Transverse colon (tissue), 4 donors: ENCODE measurements at regions of chr11 and their contacts with region 1.

Region 1: DNA sequence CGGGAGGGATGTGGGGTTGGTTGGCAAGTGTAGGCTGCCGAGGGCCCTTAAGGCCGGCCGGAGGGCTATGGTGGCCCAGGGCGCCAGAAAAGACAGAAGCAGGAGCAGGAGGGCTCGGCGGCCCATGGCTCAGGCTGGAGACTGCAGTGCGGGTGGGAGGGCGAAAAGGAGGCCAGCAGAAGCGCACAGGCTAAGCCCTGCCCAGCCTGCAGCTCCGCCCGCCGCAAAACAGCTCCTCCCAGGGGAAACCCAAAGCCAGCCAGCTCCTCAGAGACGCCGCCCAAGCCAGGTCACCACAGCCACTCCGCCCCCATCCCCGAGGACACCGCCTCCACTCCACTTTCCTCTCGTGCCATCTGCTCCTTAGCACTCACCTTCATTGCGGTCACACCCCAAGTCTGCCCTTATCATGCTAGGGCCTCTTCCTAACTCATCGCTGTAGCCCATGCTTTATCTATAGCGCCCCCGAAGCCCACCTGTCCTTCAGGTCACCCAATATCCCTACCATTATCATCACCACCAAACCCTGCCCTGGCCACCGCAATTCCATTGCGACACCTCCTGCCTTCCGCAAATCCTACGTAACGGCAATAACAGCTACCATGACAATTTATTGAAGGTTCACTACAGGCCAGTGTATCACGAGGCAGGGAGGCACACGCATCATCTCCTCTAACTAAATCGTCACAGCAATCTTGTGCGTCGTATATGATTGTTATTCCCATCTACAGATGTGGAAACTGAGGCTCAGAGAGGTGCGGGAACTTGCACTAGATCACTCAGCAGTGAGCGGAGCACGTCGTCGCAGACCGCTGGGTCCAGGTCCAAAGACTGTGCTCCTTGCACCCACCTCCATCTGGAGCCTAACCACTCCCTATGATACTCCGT is at the start of gene PRCP:
- DNase-seq: peak; percentile 97
- H3K4me3 ChIP-seq: peak within 1 kb of the TSS; percentile 4 to 72 (median 66)
- H3K27ac ChIP-seq: peak within 1 kb of the TSS; percentile 94 to 96 (median 96)
- H3K4me1 ChIP-seq: peaks cover 7 to 39% (median 24%) of the 10 kb centered on the region in 4 donors
- H3K27me3 ChIP-seq: no peaks in the 10 kb centered on the region
- CTCF ChIP-seq: no peak
- EP300 ChIP-seq: no peak
- POLR2A ChIP-seq: peak; percentile 85
- total RNA-seq, gene PRCP: 20.9 to 34.8 (median 29.9) TPM

Region 2: DNA sequence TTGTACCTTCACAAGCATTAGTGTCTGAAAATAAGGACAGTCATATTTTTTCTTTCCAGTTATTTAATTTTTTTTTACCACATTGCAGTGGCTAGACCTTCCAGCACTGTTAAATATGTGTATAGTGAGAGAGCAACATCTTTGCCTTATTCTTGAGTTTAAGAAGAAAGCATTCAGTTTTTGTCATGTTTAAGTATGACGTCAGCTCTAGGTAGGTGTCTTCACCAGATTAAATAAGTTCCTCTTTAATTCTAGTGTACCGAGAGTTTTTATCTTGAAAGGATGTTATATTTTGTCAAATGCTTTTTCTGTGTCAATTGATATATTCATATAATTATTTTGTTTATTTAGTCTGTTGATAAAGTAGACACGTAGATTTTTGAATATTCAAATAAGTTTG is 425.6 kb before region 1 on chr11:
- in situ Hi-C with region 1: no loop called
- intact Hi-C with region 1: no loop called
- DNase-seq: no peak
- H3K4me3 ChIP-seq: no peak overlapping the region
- H3K27ac ChIP-seq: no peak overlapping the region
- H3K4me1 ChIP-seq: no peaks in the 10 kb centered on the region
- H3K27me3 ChIP-seq: no peaks in the 10 kb centered on the region
- CTCF ChIP-seq: no peak
- EP300 ChIP-seq: no peak
- POLR2A ChIP-seq: no peak

Region 3: GRCh38 chr11:83063073-83063754 is 162.7 kb after region 1 on chr11:
- in situ Hi-C with region 1: loop called in 2 of 4 experiments (anchors 10 kb)
- intact Hi-C with region 1: no loop called
- DNase-seq: no peak
- H3K4me3 ChIP-seq: peak overlapping the region in 1 of 4 donors; percentile 16
- H3K27ac ChIP-seq: peak overlapping the region; percentile 54 to 68 (median 65)
- H3K4me1 ChIP-seq: peaks cover 6 to 19% (median 10%) of the 10 kb centered on the region in 4 donors
- H3K27me3 ChIP-seq: no peaks in the 10 kb centered on the region
- CTCF ChIP-seq: no peak
- EP300 ChIP-seq: no peak
- POLR2A ChIP-seq: no peak

Region 4: GRCh38 chr11:83156150-83156995 is 255.9 kb after region 1 on chr11:
- in situ Hi-C with region 1: loop called in 1 of 4 experiments (anchors 25 kb)
- intact Hi-C with region 1: loop called (anchors 10 kb)
- DNase-seq: peak; percentile 99
- H3K4me3 ChIP-seq: peak overlapping the region; percentile 30 to 80 (median 62)
- H3K27ac ChIP-seq: peak overlapping the region; percentile 91 to 100 (median 98)
- H3K4me1 ChIP-seq: peaks cover 10 to 30% (median 24%) of the 10 kb centered on the region in 4 donors
- H3K27me3 ChIP-seq: no peaks in the 10 kb centered on the region
- CTCF ChIP-seq: no peak
- EP300 ChIP-seq: no peak
- POLR2A ChIP-seq: no peak

Region 5: DNA sequence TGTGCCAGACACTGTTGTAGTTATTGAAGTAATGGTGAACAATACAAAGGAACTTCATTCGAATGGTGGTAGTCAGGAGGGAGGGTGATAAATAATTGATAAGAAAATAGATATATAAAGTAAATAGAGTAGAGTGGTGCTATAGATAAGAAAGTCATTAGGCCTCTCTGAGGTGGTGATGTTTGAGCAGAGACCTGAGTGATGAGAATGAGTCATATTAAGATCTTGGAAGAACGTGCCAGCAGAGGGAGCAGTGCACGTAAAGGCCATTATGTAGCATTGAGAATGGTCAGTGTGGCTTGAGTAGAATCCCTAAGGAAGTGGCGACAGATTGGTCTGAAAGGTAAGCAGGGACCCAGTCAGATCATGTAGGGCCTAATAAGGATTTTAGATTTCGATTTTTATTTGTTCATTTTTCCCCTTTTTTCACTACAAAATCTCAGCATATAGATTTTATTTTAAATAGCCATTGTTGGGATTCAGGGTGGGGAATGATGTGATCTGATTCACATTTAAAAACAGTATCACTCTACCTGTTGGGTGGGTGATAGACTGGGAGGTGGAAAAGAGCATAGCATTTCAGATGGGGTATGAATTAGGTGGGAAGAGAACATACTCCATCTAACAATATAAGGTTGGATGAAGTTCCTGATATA is 340.9 kb after region 1 on chr11:
- in situ Hi-C with region 1: loop called in 2 of 4 experiments (anchors 5 to 10 kb)
- intact Hi-C with region 1: loop called (anchors 10 kb)
- DNase-seq: peak; percentile 52
- H3K4me3 ChIP-seq: no peak overlapping the region
- H3K27ac ChIP-seq: no peak overlapping the region
- H3K4me1 ChIP-seq: no peaks in the 10 kb centered on the region
- H3K27me3 ChIP-seq: no peaks in the 10 kb centered on the region
- CTCF ChIP-seq: peak; percentile 36 to 51 (median 48)
- EP300 ChIP-seq: no peak
- POLR2A ChIP-seq: no peak

Region 6: DNA sequence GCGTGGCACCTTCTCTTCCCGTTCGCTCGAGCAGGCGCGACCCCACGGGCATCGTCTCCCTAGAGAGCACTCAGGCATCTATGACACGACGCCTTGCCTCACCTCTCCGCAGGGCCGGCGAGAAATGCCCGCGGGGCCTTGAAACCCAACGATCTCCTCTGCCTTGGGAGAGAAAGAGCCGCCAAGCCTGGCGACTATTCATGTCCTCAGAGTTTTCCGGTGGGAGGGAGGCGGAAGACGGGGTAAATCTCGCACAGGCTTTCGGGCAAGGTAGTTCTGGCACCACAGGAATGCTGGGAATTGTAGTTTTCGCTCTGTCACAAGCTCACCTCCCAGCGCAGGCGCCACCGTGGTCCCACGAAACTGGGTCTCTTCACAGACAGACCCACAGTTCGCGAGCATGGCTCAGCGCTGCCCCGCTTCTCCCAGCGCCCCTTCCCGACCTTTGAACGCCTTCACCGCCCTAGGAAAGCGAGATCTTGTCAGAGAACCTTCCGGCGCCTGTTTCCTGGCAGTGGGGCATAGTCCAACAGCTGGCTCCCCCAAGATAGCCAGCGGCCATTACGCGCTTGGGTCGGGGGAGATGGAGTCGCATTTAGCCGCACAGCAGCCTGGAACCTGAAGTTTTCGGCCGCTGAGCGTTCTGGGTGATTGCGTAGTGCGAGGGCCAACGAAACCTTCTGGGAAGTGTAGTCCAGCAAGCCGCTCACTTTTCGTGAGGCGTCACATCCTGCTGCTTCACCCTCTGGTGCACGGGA is 385.4 kb after region 1 on chr11 and contains the start of gene CCDC90B:
- in situ Hi-C with region 1: loop called in 1 of 4 experiments (anchors 10 kb)
- intact Hi-C with region 1: no loop called
- DNase-seq: peak; percentile 96
- H3K4me3 ChIP-seq: peak within 1 kb of the TSS; percentile 67 to 85 (median 72)
- H3K27ac ChIP-seq: peak within 1 kb of the TSS; percentile 93 to 99 (median 98)
- H3K4me1 ChIP-seq: peaks cover 10 to 37% (median 20%) of the 10 kb centered on the region in 4 donors
- H3K27me3 ChIP-seq: no peaks in the 10 kb centered on the region
- CTCF ChIP-seq: no peak
- EP300 ChIP-seq: no peak
- POLR2A ChIP-seq: peak; percentile 95
- total RNA-seq, gene CCDC90B: 3.4 to 40.6 (median 21.6) TPM